ENCODE measurements at regions of chr6 and their contacts with region 1.

Region 1: GRCh38 chr6:21348504-21349195 is 244.9 kb upstream of the SOX4 start:
- DNase-seq: peak; percentile 20
- ATAC-seq: peak; percentile 58
- H3K4me3 ChIP-seq: no peak overlapping the region
- H3K27ac ChIP-seq: no peak overlapping the region
- H3K4me1 ChIP-seq: no peaks in the 10 kb centered on the region; the same call in 1 of the 2 replicates
- H3K27me3 ChIP-seq: no peaks in the 10 kb centered on the region
- CTCF ChIP-seq: no peak

Region 2: GRCh38 chr6:20709451-20709850 is 639.2 kb before region 1 on chr6:
- CTCF ChIA-PET with region 1: no interaction called
- POLR2A ChIA-PET with region 1: interaction called, 11 read pairs
- in situ Hi-C with region 1: no loop called
- intact Hi-C with region 1: no loop called
- DNase-seq: no peak
- ATAC-seq: no peak
- H3K4me3 ChIP-seq: no peak overlapping the region
- H3K27ac ChIP-seq: no peak overlapping the region
- H3K4me1 ChIP-seq: no peaks in the 10 kb centered on the region
- H3K27me3 ChIP-seq: no peaks in the 10 kb centered on the region
- CTCF ChIP-seq: no peak

Region 3: DNA sequence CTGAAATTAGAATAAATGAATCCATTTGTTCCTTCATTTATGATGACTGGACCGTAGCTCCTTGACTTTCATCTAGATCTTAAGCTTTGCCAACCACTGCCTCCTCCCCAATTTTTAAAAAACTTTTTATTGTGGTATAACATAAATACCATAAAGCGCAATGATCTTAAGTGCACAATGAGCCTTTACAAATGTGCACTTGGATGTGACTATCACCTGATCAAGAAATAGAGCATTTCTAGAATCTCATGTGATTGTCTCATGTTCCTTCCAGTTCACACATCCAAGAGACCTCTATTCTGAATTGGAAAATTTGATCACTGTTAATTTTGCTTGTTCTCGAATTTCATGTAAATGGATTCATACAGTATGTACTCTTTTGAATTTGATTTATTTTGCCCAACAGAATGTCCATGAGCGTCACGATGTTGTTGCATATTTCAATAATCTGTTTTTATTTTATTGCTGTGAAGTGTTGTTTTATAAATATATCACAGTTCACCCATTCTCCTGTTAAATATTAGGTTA is 372.2 kb before region 1 on chr6:
- CTCF ChIA-PET with region 1: no interaction called
- POLR2A ChIA-PET with region 1: interaction called, 16 read pairs
- in situ Hi-C with region 1: no loop called
- intact Hi-C with region 1: no loop called
- DNase-seq: no peak
- ATAC-seq: no peak
- H3K4me3 ChIP-seq: no peak overlapping the region
- H3K27ac ChIP-seq: no peak overlapping the region
- H3K4me1 ChIP-seq: no peaks in the 10 kb centered on the region
- H3K27me3 ChIP-seq: no peaks in the 10 kb centered on the region
- CTCF ChIP-seq: no peak

Region 4: DNA sequence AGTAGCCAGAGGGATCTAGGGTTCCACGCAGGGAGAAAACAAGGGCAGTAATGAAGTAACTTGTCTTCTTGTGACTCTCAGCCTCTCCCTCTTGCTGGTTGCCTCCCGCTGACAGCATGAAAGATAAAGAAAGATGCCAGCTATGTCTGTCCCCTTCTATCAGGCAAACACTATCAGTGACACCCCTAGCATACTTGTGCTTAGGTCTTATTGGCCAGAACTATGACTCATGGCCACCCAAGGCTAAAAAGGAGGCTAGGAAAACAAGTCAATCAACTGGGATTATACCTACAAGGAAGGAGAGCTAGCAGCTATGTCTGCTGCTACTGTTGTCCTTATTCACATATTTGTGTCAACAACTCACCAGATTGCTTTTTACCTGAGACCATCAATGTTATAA is 38.1 kb after region 1 on chr6:
- CTCF ChIA-PET with region 1: no interaction called
- POLR2A ChIA-PET with region 1: interaction called, 10 read pairs
- in situ Hi-C with region 1: no loop called
- intact Hi-C with region 1: no loop called
- DNase-seq: no peak
- ATAC-seq: no peak
- H3K4me3 ChIP-seq: no peak overlapping the region
- H3K27ac ChIP-seq: no peak overlapping the region
- H3K4me1 ChIP-seq: no peaks in the 10 kb centered on the region
- H3K27me3 ChIP-seq: no peaks in the 10 kb centered on the region
- CTCF ChIP-seq: no peak

Region 5: GRCh38 chr6:21478863-21479539 is 130.4 kb after region 1 on chr6:
- CTCF ChIA-PET with region 1: no interaction called
- POLR2A ChIA-PET with region 1: no interaction called
- in situ Hi-C with region 1: no loop called
- intact Hi-C with region 1: no loop called
- DNase-seq: no peak
- ATAC-seq: peak; percentile 69; the same call in 1 of the 2 replicates
- H3K4me3 ChIP-seq: peak overlapping the region; percentile 15 to 39
- H3K27ac ChIP-seq: no peak overlapping the region
- H3K4me1 ChIP-seq: peaks cover 6% of the 10 kb centered on the region; the same call in 1 of the 2 replicates
- H3K27me3 ChIP-seq: no peaks in the 10 kb centered on the region
- CTCF ChIP-seq: no peak